ENCODE measurements at regions of chr11 and their contacts with region 1.

Region 1: DNA sequence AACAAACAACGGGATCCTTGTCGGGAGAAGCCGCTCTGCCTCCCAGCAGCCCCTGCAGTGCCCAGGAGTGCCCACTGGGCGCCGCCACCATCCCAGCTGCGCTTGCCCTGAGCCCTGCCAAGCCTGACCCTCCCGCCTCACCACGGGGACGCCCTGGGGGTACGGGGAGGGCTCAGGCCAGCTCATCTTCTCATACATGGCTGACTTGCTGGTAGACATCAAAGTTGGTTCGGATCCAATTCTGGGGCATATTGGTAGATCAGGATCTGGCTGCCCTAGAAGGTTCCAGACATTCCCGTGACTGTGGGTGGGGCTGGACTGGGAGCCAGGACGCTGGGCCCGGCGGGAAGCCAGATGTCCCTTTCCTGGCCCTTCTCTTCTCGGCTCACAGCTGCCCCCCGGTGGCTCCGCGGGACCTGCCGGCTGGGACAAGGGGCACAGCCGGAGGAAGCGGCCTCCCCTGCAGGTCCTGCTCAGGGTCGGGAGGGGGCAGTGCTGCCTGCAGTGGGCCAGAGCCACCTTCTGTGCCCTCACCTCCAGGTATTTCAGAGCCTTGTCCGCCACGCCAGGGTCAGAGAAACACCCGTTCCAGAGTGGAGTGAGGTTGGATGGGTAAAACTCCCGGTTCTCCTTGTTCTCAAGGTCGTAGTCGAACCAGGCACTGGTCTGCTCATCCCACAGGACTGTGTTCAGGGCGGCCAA is 10.6 kb upstream of the TREH start:
- DNase-seq: peak; percentile 91
- ATAC-seq: peak; percentile 93
- H3K4me3 ChIP-seq: peak overlapping the region; percentile 38 to 52
- H3K27ac ChIP-seq: peak overlapping the region; percentile 69
- H3K4me1 ChIP-seq: peaks cover 5 to 28% of the 10 kb centered on the region in 2 experiments; a peak in 3 of 4 replicates
- H3K27me3 ChIP-seq: no peaks in the 10 kb centered on the region
- CTCF ChIP-seq: peak; percentile 94 to 99 (median 98)
- POLR2A ChIP-seq: no peak
- RAD21 ChIP-seq: peak; percentile 90

Region 2: DNA sequence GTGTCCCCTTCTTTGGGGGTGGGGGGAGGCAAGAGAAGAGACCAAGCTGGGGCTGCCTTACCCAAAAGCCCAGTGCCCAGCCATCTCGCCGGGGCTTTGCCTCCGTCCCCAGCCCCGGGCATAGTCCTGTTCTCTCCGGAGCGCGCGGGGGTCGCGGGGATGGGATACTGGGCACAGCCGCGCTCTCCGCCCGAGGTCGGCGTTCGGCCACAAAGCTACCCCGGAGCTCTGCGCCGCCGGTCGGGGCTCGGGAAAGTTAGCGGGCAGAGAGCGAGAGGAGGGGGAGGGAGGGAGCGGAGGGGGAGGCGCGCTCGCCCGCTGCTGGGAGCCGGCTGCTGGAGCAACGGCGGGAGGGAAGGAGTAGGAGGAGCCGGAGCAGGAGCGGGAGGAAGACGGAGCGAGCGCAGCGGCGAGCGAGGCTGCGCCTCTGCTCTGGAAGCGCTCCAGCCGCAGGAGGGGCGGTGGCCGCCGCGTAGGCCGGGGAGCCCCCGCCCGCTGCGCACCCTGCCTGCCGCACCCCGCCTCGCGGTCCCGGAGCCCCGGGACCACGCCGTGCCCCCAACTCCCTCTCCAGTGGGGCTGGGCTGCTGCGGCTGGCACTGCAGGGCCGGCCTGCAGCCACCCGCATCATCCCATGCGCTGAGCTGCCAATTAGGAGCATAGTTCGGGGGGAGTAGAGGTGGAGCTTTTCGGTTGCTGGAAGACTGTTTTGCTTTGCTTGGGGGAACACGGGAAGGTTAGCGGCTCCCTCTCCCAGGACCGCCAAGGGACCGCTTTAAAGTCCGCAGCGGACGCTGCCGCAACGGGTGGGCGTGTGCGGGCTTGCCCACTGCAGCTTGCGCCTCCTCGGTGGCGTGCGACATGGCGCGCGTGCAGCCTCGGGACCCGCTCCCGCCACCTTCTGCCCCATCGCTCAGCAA is 537.2 kb before region 1 on chr11 and contains the start of gene SCN4B:
- CTCF ChIA-PET with region 1: no interaction called
- POLR2A ChIA-PET with region 1: no interaction called
- RAD21 ChIA-PET with region 1: no interaction called
- intact Hi-C with region 1: loop called (anchors 10 kb)
- DNase-seq: no peak
- ATAC-seq: peak; percentile 80
- H3K4me3 ChIP-seq: peak within 1 kb of the TSS; percentile 21 to 50
- H3K27ac ChIP-seq: no peak within 1 kb of the TSS; the same call in 1 of the 2 replicates
- H3K4me1 ChIP-seq: peaks cover 10 to 24% of the 10 kb centered on the region in 2 experiments; a peak in 3 of 4 replicates
- H3K27me3 ChIP-seq: no peaks in the 10 kb centered on the region
- CTCF ChIP-seq: no peak
- POLR2A ChIP-seq: no peak
- RAD21 ChIP-seq: no peak
- total RNA-seq, gene SCN4B: 0.32 TPM

Region 3: GRCh38 chr11:118652681-118653181 is 37.3 kb before region 1 on chr11:
- CTCF ChIA-PET with region 1: no interaction called
- POLR2A ChIA-PET with region 1: no interaction called
- RAD21 ChIA-PET with region 1: no interaction called
- intact Hi-C with region 1: no loop called
- DNase-seq: no peak
- ATAC-seq: no peak
- H3K4me3 ChIP-seq: no peak overlapping the region
- H3K27ac ChIP-seq: no peak overlapping the region
- H3K4me1 ChIP-seq: 0 out of 4 replicates have a peak, but pooled peaks cover 0 to under 1% of the 10 kb centered on the region in 2 experiments
- H3K27me3 ChIP-seq: no peaks in the 10 kb centered on the region
- CTCF ChIP-seq: no peak
- POLR2A ChIP-seq: no peak
- RAD21 ChIP-seq: no peak

Region 4: GRCh38 chr11:118679483-118679882 is 10.5 kb before region 1 on chr11 and contains the start of gene TREH:
- CTCF ChIA-PET with region 1: interaction called, 12 read pairs
- POLR2A ChIA-PET with region 1: no interaction called
- RAD21 ChIA-PET with region 1: no interaction called
- intact Hi-C with region 1: no loop called
- DNase-seq: no peak
- ATAC-seq: peak; percentile 42
- H3K4me3 ChIP-seq: peak within 1 kb of the TSS in 1 of 2 experiments; percentile 44; a peak in 2 of 4 replicates
- H3K27ac ChIP-seq: peak within 1 kb of the TSS; percentile 51
- H3K4me1 ChIP-seq: peaks cover 9 to 15% of the 10 kb centered on the region in 2 experiments
- H3K27me3 ChIP-seq: no peaks in the 10 kb centered on the region
- CTCF ChIP-seq: no peak
- POLR2A ChIP-seq: no peak
- RAD21 ChIP-seq: no peak
- total RNA-seq, gene TREH: 0.15 TPM

Region 5: GRCh38 chr11:118791111-118791965 is 101.3 kb after region 1 on chr11 and contains the start of gene DDX6:
- CTCF ChIA-PET with region 1: interaction called, 12 read pairs
- POLR2A ChIA-PET with region 1: interaction called, 6 read pairs
- RAD21 ChIA-PET with region 1: no interaction called
- intact Hi-C with region 1: loop called (anchors 1 kb)
- DNase-seq: peak; percentile 45
- ATAC-seq: peak; percentile 70
- H3K4me3 ChIP-seq: peak within 1 kb of the TSS; percentile 96 to 99
- H3K27ac ChIP-seq: peak within 1 kb of the TSS; percentile 96
- H3K4me1 ChIP-seq: peaks cover 14 to 39% of the 10 kb centered on the region in 2 experiments
- H3K27me3 ChIP-seq: no peaks in the 10 kb centered on the region
- CTCF ChIP-seq: peak in 2 of 3 experiments; percentile 16 to 17; a peak in 2 of 6 replicates
- POLR2A ChIP-seq: no peak
- RAD21 ChIP-seq: no peak; the same call in 1 of the 2 replicates
- total RNA-seq, gene DDX6: 150 TPM

Region 6: DNA sequence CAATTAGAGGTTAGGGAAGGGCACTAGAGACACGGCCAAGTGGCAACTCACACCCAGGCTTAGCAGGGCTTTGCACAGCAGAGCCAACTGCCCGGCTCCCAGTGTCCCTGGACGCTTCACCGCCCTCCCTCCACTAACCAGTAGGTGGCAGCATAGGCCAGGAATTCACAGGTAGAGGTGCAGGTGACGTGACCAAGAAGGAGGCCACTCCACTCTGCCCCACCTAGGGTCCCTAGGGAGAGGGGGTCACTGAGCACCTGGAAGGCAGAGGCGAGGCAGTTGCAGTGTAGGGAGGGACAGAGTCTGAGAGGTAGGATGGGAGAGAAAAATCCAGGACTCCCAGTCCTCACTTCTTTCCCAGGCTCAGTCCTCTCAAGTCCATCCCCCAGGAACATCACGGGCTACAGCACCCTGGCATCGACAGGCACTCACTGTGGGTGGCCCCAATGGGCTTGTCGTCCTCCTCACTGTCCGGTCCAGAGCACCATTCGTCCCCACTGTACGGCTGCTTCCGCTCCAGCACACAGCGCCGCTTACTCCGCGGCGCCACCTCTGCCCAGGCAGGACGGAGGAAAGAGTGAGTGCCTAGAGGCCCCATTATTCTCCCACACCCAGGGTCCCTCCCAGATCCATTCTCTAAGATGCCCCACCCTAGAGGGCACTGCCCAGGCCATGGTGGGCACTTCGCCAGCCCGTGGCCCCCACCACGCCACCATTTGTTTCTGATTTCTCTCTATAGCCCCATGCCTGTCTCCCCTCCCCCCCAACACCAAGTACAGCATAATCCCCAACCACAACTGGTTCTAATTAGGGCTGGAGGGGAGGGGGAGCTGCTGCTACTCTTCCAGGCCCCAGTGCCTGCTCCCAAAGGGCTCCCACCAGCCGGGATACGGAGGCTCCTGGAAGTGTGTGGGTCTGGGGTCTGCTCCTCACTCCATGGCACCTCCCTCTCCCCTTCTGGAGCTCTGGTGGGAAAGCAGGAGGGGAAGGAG is 217.3 kb after region 1 on chr11:
- CTCF ChIA-PET with region 1: interaction called, 12 read pairs
- POLR2A ChIA-PET with region 1: interaction called, 5 read pairs
- RAD21 ChIA-PET with region 1: interaction called in 1 of 2 experiments, 5 read pairs
- intact Hi-C with region 1: no loop called
- DNase-seq: no peak
- ATAC-seq: peak; percentile 50
- H3K4me3 ChIP-seq: peak overlapping the region; percentile 18 to 19; a peak in 3 of 4 replicates
- H3K27ac ChIP-seq: peak overlapping the region; percentile 100
- H3K4me1 ChIP-seq: peaks cover 37 to 61% of the 10 kb centered on the region in 2 experiments
- H3K27me3 ChIP-seq: no peaks in the 10 kb centered on the region
- CTCF ChIP-seq: peak in 2 of 3 experiments; percentile 87 to 92; a peak in 4 of 6 replicates
- POLR2A ChIP-seq: no peak
- RAD21 ChIP-seq: no peak

Region 7: DNA sequence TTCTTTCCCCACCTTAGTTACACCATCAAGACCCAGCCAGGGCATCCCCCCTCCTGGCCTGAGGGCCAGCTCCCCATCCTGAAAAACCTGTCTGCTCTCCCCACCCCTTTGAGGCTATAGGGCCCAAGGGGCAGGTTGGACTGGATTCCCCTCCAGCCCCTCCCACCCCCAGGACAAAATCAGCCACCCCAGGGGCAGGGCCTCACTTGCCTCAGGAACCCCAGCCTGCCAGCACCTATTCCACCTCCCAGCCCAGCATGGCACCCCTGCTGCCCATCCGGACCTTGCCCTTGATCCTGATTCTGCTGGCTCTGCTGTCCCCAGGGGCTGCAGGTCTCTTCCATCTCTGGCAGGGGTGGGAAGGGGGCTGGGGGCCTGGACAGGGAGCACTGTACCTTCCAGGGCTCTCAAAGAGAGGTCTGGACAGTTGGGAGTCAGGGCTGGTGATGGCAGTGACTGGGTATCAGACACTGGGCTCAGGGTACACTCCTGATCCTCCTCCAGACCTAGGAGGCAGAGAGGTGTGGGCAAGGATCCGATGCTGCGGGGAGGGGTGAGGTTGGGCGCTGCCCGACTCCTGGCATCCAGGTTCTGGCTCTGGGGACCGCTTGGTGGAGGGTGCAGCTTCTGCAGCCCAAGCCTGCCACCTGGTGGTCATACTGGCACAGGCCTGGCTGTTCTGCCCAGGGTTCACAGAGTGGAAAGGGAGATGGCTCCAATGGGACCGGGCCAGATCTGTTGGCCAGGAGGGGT is 266.3 kb after region 1 on chr11 and contains the start of gene UPK2:
- CTCF ChIA-PET with region 1: interaction called, 28 read pairs
- POLR2A ChIA-PET with region 1: interaction called, 3 read pairs
- RAD21 ChIA-PET with region 1: interaction called in 1 of 2 experiments, 3 read pairs
- intact Hi-C with region 1: loop called (anchors 1 kb)
- DNase-seq: peak; percentile 78
- ATAC-seq: peak; percentile 99
- H3K4me3 ChIP-seq: no peak within 1 kb of the TSS
- H3K27ac ChIP-seq: no peak within 1 kb of the TSS
- H3K4me1 ChIP-seq: peaks cover 0 to 18% of the 10 kb centered on the region in 2 experiments; a peak in 2 of 4 replicates
- H3K27me3 ChIP-seq: no peaks in the 10 kb centered on the region
- CTCF ChIP-seq: peak; percentile 96 to 97 (median 96)
- POLR2A ChIP-seq: no peak
- RAD21 ChIP-seq: peak; percentile 100
- total RNA-seq, gene UPK2: 0.42 TPM

Region 8: DNA sequence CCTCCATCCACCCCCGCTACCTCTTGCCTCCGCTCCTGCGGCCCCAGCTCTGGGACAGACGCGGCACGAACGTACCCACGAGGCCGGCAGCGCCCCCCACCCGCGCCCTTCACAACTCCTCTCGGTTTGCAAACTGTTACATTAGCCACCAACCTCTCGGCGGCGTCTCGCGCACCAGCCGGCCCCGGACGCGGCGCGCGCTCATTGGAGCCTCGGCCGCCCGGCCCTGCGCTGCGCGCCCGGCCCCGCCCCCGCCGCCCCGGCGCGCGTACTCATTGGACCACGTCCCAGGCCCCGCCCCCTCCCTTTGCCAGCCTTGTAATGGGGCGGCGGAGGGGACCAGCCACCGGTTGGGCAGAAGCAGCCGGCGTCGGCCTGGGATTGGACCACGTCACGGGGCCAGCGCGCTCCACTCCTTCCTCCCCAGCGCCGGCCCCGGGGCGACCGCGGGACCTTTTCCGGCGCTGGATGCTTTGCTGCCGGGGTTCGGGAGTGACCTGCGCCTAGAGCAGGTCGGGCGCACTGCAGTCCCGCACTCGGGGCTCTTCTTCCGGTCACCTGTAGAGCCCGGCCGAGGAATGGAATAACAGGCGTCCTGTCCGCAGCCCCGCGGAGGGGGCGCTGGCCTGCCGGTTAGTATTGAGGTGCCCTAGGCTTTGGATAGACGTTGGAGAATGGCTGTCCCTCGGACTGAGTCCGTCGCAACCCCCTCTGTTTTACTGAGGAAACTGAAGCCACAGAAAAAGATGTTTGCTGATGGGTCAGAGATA is 367.2 kb after region 1 on chr11 and contains the start of gene HYOU1:
- CTCF ChIA-PET with region 1: interaction called, 3 read pairs
- POLR2A ChIA-PET with region 1: no interaction called
- RAD21 ChIA-PET with region 1: no interaction called
- intact Hi-C with region 1: loop called (anchors 1 kb)
- DNase-seq: peak; percentile 87
- ATAC-seq: peak; percentile 95
- H3K4me3 ChIP-seq: peak within 1 kb of the TSS; percentile 75 to 96
- H3K27ac ChIP-seq: peak within 1 kb of the TSS; percentile 77
- H3K4me1 ChIP-seq: peaks cover 4 to 17% of the 10 kb centered on the region in 2 experiments; a peak in 3 of 4 replicates
- H3K27me3 ChIP-seq: no peaks in the 10 kb centered on the region
- CTCF ChIP-seq: peak in 2 of 3 experiments; percentile 22 to 34; a peak in 3 of 6 replicates
- POLR2A ChIP-seq: peak; percentile 63
- RAD21 ChIP-seq: no peak
- total RNA-seq, gene HYOU1: 181 TPM